ENCODE measurements at regions of chr5 and their contacts with region 1.

Region 1: DNA sequence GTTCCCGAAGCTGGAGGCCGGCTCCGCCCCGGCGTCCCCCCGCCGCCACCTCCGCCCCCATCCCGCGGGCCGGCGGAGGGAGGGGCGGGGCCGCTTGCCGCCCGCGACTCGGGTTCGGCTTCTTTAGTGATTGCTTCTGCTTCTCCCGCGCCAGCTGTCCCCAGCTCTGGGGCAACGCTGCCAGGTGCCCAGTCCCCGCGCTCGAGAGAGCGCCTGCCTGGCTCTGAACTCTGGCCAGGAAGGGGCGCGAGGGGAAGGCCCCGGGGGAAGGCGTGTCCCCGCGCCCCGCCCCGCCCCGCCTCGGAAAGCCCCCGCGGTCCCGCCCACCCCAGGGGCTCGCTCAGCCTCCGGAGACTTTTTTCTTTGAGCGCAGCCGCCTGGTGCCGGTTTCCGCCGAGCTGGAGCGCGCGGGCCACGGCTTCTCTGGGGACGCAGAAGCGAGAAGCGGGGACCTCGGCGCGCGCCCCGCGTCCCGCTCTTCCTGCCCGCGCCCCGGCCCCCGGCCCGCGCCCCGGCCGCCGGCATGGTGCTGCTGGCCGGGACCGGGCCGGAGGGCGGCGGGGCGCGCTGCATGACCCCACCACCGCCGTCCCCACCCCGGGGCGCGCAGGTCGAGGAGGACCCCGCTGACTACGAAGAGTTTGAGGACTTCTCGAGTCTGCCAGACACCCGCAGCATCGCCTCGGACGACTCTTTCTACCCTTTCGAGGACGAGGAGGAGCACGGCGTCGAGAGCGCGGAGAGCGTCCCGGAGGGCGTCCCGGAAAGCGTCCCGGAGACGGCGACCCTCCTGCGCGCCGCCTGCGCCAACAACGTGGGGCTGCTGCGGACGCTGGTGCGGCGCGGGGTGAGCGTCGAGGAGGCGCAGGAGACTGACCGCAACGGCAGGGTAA is at the start of gene ANKRD33B:
- DNase-seq: peak; percentile 85
- H3K4me3 Mint-ChIP-seq: peak within 1 kb of the TSS; percentile 84
- H3K27ac Mint-ChIP-seq: peak within 1 kb of the TSS; percentile 78
- H3K4me1 Mint-ChIP-seq: peaks cover 15% of the 10 kb centered on the region
- H3K27me3 Mint-ChIP-seq: peaks cover 20% of the 10 kb centered on the region
- total RNA-seq, gene ANKRD33B: 1.9 to 2.5 TPM

Region 2: DNA sequence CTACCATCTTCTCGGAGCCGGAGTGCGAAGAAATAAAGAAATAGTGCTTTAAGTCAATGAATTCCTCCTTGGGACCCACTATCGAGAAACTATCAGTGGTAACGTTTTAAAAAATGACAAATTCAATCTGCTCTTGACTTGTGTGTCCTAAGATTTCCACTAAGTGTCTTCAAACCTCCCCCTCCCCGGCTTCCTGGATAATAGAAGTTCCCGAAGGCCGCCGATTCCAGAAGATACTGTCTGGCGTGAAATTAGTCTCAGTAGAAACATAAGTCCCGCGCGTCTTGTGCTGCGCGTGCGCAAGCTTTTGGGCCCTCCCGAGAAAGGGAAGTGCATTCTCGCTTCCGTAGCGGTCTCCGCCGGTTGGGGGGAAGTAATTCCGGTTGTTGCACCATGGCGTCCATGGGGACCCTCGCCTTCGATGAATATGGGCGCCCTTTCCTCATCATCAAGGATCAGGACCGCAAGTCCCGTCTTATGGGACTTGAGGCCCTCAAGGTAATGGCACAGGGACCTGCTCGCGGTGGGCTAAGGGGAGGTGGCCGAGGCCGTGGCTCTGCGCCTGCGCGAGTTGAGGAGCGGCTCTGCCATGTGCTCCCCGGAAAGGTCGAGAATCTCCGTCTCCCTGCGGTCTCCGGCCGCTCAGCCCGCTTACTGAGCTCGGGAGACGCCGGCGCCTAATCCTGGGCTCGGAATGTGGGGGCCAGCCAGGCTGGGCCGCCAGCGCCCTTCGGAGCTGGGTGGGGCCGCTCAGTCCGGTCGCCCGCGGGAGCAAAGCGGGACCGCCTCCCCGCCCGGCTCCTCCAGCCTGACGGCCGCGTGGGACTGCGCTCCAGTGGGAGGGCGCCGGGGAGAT is 314.0 kb before region 1 on chr5 and contains the start of gene CCT5:
- CTCF ChIA-PET with region 1: no interaction called
- intact Hi-C with region 1: loop called (anchors 1 kb)
- DNase-seq: peak; percentile 93
- H3K4me3 Mint-ChIP-seq: peak within 1 kb of the TSS; percentile 86
- H3K27ac Mint-ChIP-seq: peak within 1 kb of the TSS; percentile 99
- H3K4me1 Mint-ChIP-seq: peaks cover 47% of the 10 kb centered on the region
- H3K27me3 Mint-ChIP-seq: no peaks in the 10 kb centered on the region
- total RNA-seq, gene CCT5: 414 to 419 TPM

Region 3: DNA sequence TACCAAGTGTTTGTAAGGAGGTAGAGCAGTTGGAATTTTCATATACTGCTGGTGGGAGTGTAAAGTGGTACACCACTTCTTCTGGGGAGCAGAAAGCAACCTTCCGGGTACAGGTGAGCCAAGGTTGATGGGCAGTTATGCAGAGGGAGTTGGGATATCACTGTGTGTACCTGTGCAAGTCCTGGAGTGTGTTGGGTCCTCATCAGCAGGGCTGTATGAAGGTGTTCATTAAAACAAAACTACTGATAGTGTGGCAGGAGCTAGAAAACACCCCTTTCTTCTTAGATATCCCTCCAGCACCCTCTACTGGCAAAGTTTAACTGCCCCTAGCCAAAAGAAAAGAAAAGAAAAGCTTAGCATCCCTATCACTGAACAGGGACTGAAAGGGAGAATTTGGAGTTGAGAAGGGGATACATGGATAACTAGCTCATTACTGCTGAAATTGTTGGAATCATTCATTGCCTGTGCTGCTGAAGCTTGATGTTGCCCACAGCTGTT is 200.0 kb before region 1 on chr5:
- CTCF ChIA-PET with region 1: no interaction called
- intact Hi-C with region 1: no loop called
- DNase-seq: no peak
- H3K4me3 Mint-ChIP-seq: no peak overlapping the region
- H3K27ac Mint-ChIP-seq: no peak overlapping the region
- H3K4me1 Mint-ChIP-seq: peaks cover 72% of the 10 kb centered on the region
- H3K27me3 Mint-ChIP-seq: no peaks in the 10 kb centered on the region

Region 4: DNA sequence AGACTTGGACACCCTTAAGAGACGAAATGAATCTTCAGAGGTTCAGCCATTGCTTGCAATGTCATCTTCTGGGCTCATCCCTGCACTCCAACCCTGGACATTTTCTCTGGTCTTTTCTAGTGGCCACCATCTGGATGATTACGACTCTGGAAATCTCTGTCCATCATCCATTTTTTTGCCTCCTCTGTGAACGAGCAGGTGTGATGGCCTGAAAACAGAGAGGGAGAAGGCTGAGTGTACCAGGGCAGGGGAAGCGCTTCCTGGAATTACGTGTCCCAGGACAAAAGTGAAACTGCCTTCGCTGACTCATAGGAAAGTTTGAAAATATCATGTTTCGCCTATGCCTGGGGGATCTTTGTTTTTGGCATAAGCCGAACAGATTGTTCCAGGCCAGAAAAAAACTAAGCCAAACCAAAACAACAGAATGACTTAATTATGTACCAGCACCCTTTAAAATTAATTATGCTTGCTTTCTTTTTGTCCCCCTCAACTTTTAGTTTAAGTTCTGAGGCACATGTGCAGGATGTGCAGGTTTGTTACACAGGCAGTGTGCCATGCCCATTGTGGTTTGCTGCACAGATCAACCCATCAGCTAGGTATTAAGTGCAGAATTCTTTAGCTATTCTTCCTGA is 31.6 kb after region 1 on chr5:
- CTCF ChIA-PET with region 1: no interaction called
- intact Hi-C with region 1: loop called (anchors 5 kb)
- DNase-seq: peak; percentile 68
- H3K4me3 Mint-ChIP-seq: no peak overlapping the region
- H3K27ac Mint-ChIP-seq: no peak overlapping the region
- H3K4me1 Mint-ChIP-seq: peaks cover 35% of the 10 kb centered on the region
- H3K27me3 Mint-ChIP-seq: peaks cover 27% of the 10 kb centered on the region

Region 5: GRCh38 chr5:10761166-10761932 is 197.2 kb after region 1 on chr5 and contains the start of gene DAP:
- CTCF ChIA-PET with region 1: no interaction called
- intact Hi-C with region 1: loop called (anchors 1 kb)
- DNase-seq: peak; percentile 78
- H3K4me3 Mint-ChIP-seq: peak within 1 kb of the TSS; percentile 84
- H3K27ac Mint-ChIP-seq: peak within 1 kb of the TSS; percentile 83
- H3K4me1 Mint-ChIP-seq: peaks cover 41% of the 10 kb centered on the region
- H3K27me3 Mint-ChIP-seq: peaks cover 3% of the 10 kb centered on the region
- total RNA-seq, gene DAP: 29.5 to 29.7 TPM

Measured in activated naive CD4-positive, alpha-beta T cell treated with anti-CD3 and anti-CD28 coated beads for 36 hours (primary cell).